Panc1 (cell line): ENCODE measurements at regions of chr12 and their contacts with region 1.

Region 1: GRCh38 chr12:32596030-32596429 is 83.1 kb upstream of the DNM1L start:
- DNase-seq: no peak
- ATAC-seq: no peak
- H3K4me3 ChIP-seq: no peak overlapping the region
- H3K27ac ChIP-seq: no peak overlapping the region
- H3K4me1 ChIP-seq: no peaks in the 10 kb centered on the region
- H3K27me3 ChIP-seq: no peaks in the 10 kb centered on the region
- CTCF ChIP-seq: no peak

Region 2: GRCh38 chr12:32566663-32567295 is 29.3 kb before region 1 on chr12:
- CTCF ChIA-PET with region 1: no interaction called
- POLR2A ChIA-PET with region 1: no interaction called
- in situ Hi-C with region 1: no loop called
- intact Hi-C with region 1: loop called (anchors 1 kb)
- DNase-seq: no peak
- ATAC-seq: peak; percentile 59
- H3K4me3 ChIP-seq: no peak overlapping the region
- H3K27ac ChIP-seq: no peak overlapping the region
- H3K4me1 ChIP-seq: peaks cover 8% of the 10 kb centered on the region
- H3K27me3 ChIP-seq: no peaks in the 10 kb centered on the region
- CTCF ChIP-seq: no peak

Region 3: GRCh38 chr12:32577328-32577727 is 18.7 kb before region 1 on chr12:
- CTCF ChIA-PET with region 1: no interaction called
- POLR2A ChIA-PET with region 1: no interaction called
- in situ Hi-C with region 1: no loop called
- intact Hi-C with region 1: no loop called
- DNase-seq: no peak
- ATAC-seq: no peak
- H3K4me3 ChIP-seq: no peak overlapping the region
- H3K27ac ChIP-seq: no peak overlapping the region
- H3K4me1 ChIP-seq: no peaks in the 10 kb centered on the region
- H3K27me3 ChIP-seq: no peaks in the 10 kb centered on the region
- CTCF ChIP-seq: no peak